ENCODE measurements at regions of chr18 and their contacts with region 1.

Region 1: GRCh38 chr18:77197073-77197472 is 52.6 kb upstream of the GALR1 start:
- DNase-seq: no peak

Region 2: GRCh38 chr18:77079954-77080682 is 117.0 kb before region 1 on chr18:
- intact Hi-C with region 1: loop called in 1 of 2 experiments (anchors 5 kb)
- DNase-seq: no peak

Region 3: GRCh38 chr18:77234504-77235365 is 37.7 kb after region 1 on chr18:
- intact Hi-C with region 1: no loop called
- DNase-seq: peak; percentile 62